ENCODE measurements at regions of chr1 and their contacts with region 1.

Region 1: GRCh38 chr1:159936273-159936904 is 9.0 kb downstream of the IGSF9 start:
- DNase-seq: peak; percentile 49 to 88 (median 71)
- ATAC-seq: peak; percentile 39 to 73 (median 68)
- H3K4me3 ChIP-seq: no peak overlapping the region
- H3K27ac ChIP-seq: no peak overlapping the region
- H3K4me1 ChIP-seq: peaks cover 0 to 23% (median 7%) of the 10 kb centered on the region in 12 donors
- H3K27me3 ChIP-seq: peaks cover 0 to 15% (median 0%) of the 10 kb centered on the region in 9 donors
- CTCF ChIP-seq: peak; percentile 90 to 99 (median 97)
- POLR2A ChIP-seq: no peak

Region 2: DNA sequence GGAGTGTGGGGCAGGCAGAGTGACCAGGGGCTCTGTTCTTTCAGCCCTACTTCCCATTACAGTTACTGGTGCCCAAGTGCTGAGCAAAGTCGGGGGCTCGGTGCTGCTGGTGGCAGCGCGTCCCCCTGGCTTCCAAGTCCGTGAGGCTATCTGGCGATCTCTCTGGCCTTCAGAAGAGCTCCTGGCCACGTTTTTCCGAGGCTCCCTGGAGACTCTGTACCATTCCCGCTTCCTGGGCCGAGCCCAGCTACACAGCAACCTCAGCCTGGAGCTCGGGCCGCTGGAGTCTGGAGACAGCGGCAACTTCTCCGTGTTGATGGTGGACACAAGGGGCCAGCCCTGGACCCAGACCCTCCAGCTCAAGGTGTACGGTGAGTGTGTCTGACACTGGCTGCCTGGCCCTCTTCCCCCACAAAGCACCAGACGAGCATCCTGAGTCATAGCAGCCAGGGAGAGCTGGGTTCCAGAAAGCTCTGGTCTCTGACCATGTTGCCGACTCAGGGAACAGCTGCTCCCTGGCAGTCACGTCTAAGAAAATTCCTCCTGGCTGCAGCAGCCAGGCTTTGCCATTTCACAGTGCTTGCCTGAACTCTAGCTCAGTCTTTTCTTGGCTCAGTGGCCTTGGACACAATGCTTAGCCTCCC is 106.4 kb before region 1 on chr1:
- intact Hi-C with region 1: loop called in 1 of 10 experiments (anchors 10 kb)
- DNase-seq: peak in 3 of 5 donors; percentile 39 to 62 (median 55)
- ATAC-seq: peak; percentile 21 to 62 (median 48)
- H3K4me3 ChIP-seq: peak overlapping the region in 1 of 12 donors; percentile 58
- H3K27ac ChIP-seq: peak overlapping the region in 1 of 12 donors; percentile 91
- H3K4me1 ChIP-seq: peaks cover 0 to 56% (median 0%) of the 10 kb centered on the region in 12 donors
- H3K27me3 ChIP-seq: no peaks in the 10 kb centered on the region
- CTCF ChIP-seq: no peak
- POLR2A ChIP-seq: no peak

Region 3: GRCh38 chr1:160006312-160006940 is 70.0 kb after region 1 on chr1:
- intact Hi-C with region 1: loop called (anchors 1 to 2 kb)
- DNase-seq: peak; percentile 35 to 80 (median 70)
- ATAC-seq: peak in 3 of 4 donors; percentile 62 to 74 (median 64)
- H3K4me3 ChIP-seq: no peak overlapping the region
- H3K27ac ChIP-seq: no peak overlapping the region
- H3K4me1 ChIP-seq: no peaks in the 10 kb centered on the region
- H3K27me3 ChIP-seq: peaks cover 0 to 2% (median 0%) of the 10 kb centered on the region in 9 donors
- CTCF ChIP-seq: peak; percentile 62 to 88 (median 74)
- POLR2A ChIP-seq: no peak